ENCODE measurements at regions of chr4 and their contacts with region 1.

Region 1: DNA sequence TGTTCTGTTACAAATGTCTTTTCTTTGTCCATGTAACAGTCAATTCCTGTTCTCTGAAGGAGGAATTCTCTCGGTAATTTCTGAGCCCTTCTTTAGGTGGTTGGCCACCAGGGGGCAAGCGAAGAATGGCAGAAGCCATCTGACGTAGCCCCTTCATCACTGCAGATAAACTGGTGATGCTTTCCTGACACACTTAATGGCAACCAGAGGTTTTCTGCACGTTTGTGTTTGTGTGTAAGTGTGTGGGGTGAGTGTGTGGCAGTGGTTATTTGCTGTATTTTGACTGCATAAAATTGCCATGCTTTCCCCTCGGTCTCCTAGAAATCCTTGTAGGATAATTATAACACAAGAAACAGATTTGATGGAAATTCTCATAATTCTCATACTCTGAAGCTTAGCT is 64.8 kb upstream of the STOX2 start:
- DNase-seq: peak; percentile 72 to 92
- H3K4me3 ChIP-seq: no peak overlapping the region
- CTCF ChIP-seq: peak in 1 of 3 donors; percentile 54
- POLR2A ChIP-seq: no peak

Region 2: GRCh38 chr4:183936574-183937345 is 96.4 kb after region 1 on chr4:
- intact Hi-C with region 1: no loop called
- DNase-seq: no peak
- H3K4me3 ChIP-seq: no peak overlapping the region
- CTCF ChIP-seq: no peak
- POLR2A ChIP-seq: no peak

Region 3: DNA sequence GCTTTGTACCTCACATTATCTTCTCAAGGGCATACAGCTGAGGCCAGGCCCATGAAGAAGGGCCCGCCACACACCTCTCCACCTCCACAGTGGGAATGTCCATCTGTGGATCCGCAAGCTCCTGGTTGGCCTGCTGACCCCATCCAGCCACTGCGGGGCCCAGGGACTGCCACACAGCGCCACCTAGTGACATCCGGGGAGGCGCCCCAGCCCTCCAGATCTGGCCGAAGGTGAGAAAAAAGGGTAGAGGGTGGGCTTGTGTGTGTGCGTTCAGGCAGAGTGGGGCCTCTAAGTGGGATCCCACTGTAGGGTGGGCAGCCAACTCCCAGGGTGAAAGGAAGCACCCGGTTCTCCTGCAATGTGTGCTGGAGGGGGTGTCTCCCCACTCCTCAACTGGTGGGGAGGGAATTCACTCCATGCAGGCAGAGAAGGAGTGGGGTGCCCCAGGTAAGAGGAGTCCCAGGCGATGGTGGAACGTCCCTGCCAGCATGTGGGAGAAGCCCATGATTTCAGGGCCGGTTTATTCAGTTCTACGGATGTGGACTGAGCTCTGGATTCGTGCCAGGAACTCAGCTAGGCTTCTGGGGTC is 260.1 kb after region 1 on chr4:
- intact Hi-C with region 1: loop called (anchors 5 kb)
- DNase-seq: peak in 1 of 2 donors; percentile 80
- H3K4me3 ChIP-seq: no peak overlapping the region
- CTCF ChIP-seq: no peak
- POLR2A ChIP-seq: no peak

Region 4: DNA sequence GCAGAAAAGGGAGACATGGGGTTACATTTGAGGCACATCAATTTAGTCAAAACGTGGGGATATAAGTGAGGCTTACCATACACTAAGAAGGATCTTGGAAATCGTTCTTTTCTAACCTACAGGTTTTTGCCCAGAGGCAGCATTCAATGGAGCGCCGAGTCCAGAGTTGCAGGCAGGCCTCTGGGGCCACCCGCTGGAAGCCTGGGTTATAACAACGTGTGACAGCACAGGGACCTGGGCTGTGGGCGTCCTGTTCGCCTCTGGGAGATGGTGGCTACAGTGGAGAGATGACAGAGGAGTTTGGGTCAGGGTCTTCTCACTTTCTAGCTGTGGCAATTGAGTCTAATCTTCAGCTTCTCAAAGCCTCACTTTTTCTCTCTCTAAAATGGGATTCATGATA is 323.5 kb after region 1 on chr4:
- intact Hi-C with region 1: loop called (anchors 5 kb)
- DNase-seq: peak in 1 of 2 donors; percentile 82
- H3K4me3 ChIP-seq: no peak overlapping the region
- CTCF ChIP-seq: no peak
- POLR2A ChIP-seq: no peak

Region 5: GRCh38 chr4:184250795-184251669 is 410.7 kb after region 1 on chr4:
- intact Hi-C with region 1: loop called (anchors 5 kb)
- DNase-seq: no peak
- H3K4me3 ChIP-seq: no peak overlapping the region
- CTCF ChIP-seq: no peak
- POLR2A ChIP-seq: no peak